ENCODE measurements at regions of chr2 and their contacts with region 1.

Region 1: GRCh38 chr2:43024515-43025011 is 201.8 kb downstream of the ZFP36L2 start:
- DNase-seq: peak in 1 of 2 experiments; percentile 67
- H3K4me3 ChIP-seq: no peak overlapping the region
- H3K27ac ChIP-seq: no peak overlapping the region
- H3K4me1 ChIP-seq: peaks cover 19% of the 10 kb centered on the region; the same call in 1 of the 2 replicates
- H3K27me3 ChIP-seq: no peaks in the 10 kb centered on the region
- CTCF ChIP-seq: peak; percentile 90

Region 2: DNA sequence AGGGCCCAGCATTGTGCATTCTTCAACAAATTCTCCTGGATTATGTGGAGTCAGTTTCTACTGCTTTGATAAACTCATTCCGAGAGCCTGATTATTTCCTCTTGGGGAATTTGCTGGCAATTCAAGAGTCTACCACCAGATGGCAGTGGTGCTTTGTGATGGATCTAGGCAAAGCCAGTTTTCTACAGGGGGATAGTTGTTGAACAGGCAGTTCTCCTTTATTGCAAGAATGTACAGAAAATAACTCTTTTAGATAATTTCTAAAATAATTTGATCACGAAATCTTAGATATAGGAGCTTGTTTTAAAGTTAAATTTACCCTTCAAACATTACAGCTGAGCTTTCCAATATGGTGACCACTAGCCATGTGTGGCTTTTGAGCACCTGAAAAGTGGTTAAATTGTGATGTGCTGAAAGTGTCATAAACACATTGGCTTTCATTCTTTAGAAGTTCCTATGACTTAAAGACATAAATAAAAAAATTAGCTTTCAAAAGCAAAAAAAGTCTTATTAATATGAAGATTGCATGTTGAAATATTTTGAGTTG is 165.5 kb before region 1 on chr2:
- CTCF ChIA-PET with region 1: interaction called, 4 read pairs
- POLR2A ChIA-PET with region 1: no interaction called
- intact Hi-C with region 1: loop called (anchors 5 kb)
- DNase-seq: peak; percentile 64 to 65
- H3K4me3 ChIP-seq: no peak overlapping the region
- H3K27ac ChIP-seq: no peak overlapping the region
- H3K4me1 ChIP-seq: no peaks in the 10 kb centered on the region
- H3K27me3 ChIP-seq: no peaks in the 10 kb centered on the region
- CTCF ChIP-seq: peak; percentile 99

Region 3: GRCh38 chr2:42872721-42873120 is 151.8 kb before region 1 on chr2:
- CTCF ChIA-PET with region 1: no interaction called
- POLR2A ChIA-PET with region 1: no interaction called
- intact Hi-C with region 1: no loop called
- DNase-seq: no peak
- H3K4me3 ChIP-seq: no peak overlapping the region
- H3K27ac ChIP-seq: no peak overlapping the region
- H3K4me1 ChIP-seq: no peaks in the 10 kb centered on the region
- H3K27me3 ChIP-seq: no peaks in the 10 kb centered on the region
- CTCF ChIP-seq: no peak

Region 4: DNA sequence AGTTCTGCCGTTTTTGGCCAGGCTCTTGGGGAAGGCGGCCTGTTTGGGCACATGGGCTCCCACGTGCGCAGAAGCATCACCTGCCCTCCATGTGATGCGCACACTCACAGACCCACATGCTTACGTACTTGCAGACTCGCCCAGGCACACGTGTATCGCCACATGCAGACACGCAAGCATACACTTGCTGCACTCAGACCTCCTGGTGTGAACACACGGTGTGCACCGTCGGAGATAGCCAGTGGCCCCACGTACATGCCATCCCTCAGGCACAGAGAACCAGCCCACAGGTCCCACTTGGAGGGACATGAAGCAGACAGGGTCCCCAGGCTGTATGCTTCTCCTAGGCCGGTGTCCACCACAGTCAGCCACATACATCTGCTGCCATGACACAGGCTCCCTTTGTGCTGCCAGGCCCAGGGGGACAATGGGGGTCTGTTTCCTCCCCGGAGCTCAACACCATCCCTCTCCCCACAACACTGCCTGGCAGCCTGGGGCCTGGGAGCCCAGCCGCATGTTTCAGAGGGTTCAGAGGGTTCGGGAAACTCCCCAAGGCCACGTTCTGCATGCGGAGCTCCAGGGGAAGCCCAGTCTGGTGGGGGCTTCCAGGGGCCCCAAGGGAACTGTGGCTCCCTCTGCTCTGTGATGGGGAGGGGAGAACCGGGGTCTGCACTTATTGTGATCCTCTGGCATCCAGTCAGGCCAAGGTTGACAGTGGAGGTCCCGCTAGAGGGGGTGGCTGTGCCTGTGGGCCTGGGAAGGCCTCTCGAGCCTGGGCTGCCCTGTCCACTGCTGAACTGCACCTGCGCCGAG is 24.1 kb before region 1 on chr2:
- CTCF ChIA-PET with region 1: no interaction called
- POLR2A ChIA-PET with region 1: no interaction called
- intact Hi-C with region 1: no loop called
- DNase-seq: no peak
- H3K4me3 ChIP-seq: no peak overlapping the region
- H3K27ac ChIP-seq: no peak overlapping the region
- H3K4me1 ChIP-seq: peaks cover 8% of the 10 kb centered on the region; the same call in 1 of the 2 replicates
- H3K27me3 ChIP-seq: no peaks in the 10 kb centered on the region
- CTCF ChIP-seq: no peak

Region 5: DNA sequence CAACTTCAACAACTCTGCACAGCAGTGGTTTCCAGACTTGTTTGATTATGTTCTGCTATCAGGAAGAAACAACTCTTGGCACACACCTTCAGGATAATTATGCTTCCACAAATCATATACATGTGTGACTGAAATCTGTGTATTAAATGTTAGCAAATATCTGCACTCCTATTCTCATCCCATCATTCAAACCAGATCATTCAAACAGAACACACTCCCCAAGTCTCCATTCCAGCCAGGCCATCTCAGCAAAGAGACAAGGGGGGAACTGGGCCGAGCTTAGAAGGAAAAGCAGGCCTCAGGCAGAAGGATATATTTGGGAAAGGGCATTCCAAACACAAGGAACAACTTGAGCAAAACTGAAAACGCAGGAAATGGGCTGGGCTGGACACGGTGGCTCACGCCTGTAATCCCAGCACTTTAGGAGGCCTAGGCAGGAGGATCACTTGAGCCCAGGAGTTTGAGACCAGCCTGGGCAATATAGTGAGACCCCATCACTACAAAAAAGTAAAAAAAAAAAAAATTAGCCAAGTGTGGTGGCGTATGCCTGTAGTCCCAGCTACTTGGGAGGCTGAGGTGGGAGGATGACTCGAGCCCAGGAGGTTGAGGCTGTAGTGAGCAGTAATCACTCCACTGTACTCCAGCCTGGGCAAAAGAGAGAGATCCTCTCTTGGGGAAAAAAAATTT is 139.2 kb after region 1 on chr2:
- CTCF ChIA-PET with region 1: interaction called, 11 read pairs
- POLR2A ChIA-PET with region 1: interaction called, 3 read pairs
- intact Hi-C with region 1: no loop called
- DNase-seq: peak in 1 of 2 experiments; percentile 25
- H3K4me3 ChIP-seq: no peak overlapping the region
- H3K27ac ChIP-seq: no peak overlapping the region
- H3K4me1 ChIP-seq: peaks cover 53% of the 10 kb centered on the region
- H3K27me3 ChIP-seq: no peaks in the 10 kb centered on the region
- CTCF ChIP-seq: no peak

Measured in PC-9 (cell line).